Activated T-helper 1 cell treated with anti-CD3 and anti-CD28 coated beads, Interleukin-12 subunit alpha, Interleukin-12 subunit beta, Interleukin-2, Interleukin-4 antibody, amounts not matched to agents 30 ng/mL and 10 ng/mL and 1 ng/mL, durations not matched to agents 14 hours and 24 hours and 36 hours (primary cell): ENCODE measurements at regions of chr6 and their contacts with region 1.

Region 1: DNA sequence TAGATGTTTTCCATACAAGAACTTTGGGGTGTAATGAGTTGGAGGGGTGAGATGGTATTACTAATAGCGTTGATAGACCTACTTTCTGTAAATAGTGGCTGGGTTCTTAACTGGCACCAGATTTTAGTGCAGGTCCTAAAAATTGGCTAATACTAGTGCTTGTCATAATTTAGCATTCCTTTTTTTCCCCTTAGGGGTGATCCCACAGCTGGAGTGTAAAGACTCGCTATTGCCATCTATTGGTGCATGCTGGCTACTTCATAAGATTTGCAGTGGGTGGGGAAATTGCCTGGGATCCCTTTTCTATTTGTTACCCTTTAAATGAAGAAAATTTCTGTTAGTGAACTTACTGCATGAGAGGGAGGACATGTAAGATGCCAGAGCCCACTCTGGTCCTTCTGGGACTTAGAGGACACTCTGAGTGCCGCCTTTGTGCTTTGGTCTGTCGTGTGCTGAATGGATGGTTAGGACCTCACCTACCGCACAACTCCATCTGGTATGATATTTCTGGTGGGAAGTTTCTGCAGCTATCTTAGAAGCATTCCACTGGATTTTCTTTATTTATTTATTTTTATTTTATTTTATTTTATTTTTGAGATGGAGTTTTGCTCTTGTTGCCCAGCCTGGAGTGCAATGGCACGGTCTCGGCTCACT is 195.5 kb downstream of the JARID2 start:
- DNase-seq: no peak
- H3K4me3 Mint-ChIP-seq: no peak overlapping the region
- H3K27ac Mint-ChIP-seq: no peak overlapping the region
- H3K4me1 Mint-ChIP-seq: peaks cover 83% of the 10 kb centered on the region
- H3K27me3 Mint-ChIP-seq: no peaks in the 10 kb centered on the region

Region 2: DNA sequence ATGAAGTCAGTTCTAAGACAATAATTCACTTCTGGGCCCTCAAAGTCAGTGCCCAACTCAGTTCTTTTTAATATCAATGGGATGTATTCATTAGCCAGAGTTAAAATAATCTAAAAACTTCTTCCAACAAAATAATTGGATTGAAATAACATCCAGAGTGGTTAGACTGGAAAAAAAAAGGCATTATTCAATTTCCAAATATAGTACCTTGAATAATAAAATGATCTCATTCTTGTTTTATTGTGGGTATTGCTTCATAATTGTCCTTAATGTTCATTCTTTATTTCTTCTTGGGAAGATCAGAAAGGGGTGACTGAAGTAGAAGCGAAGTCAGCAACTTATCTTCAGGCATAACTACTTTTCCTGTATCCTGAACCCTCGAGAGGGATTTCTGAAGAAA is 280.5 kb before region 1 on chr6:
- intact Hi-C with region 1: no loop called
- DNase-seq: no peak
- H3K4me3 Mint-ChIP-seq: no peak overlapping the region
- H3K27ac Mint-ChIP-seq: no peak overlapping the region
- H3K4me1 Mint-ChIP-seq: no peaks in the 10 kb centered on the region
- H3K27me3 Mint-ChIP-seq: peaks cover 3% of the 10 kb centered on the region

Region 3: DNA sequence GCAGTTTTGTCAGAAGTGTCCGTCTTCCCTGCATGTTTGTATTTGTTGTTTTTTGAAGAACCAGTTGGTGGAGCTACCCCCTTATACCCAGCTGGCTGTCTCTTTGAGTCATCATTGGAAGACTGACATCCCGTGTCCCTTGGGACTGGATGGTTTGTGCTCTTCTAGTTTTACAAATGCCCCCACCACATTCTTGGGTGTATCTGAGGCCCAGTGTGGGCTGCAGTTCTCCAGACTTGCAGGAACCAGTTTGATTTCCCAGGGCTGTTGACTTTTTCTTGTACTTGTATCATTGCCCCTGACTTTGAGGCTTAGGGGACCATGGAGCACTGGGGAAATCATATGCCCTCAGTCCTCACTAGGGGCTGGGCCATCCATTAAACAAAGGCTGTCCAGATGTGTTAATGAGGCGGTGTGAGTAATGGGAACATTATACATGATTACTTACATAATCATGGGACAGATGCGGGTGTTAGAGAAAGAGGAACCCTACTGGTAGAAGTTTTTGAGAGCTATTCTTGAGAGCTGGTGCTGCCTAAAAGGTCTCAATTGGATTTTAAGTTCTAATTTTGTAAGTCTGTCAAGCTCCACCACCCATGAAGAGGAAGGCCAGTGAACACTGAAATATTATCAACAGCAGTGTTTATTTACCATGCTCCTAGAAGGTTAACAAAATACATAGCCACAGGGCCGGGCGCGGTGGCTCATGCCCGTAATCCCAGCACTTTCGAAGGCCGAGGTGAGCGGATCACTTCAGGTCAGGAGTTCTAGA is 187.1 kb before region 1 on chr6:
- intact Hi-C with region 1: loop called (anchors 1 kb)
- DNase-seq: no peak
- H3K4me3 Mint-ChIP-seq: peak overlapping the region; percentile 41
- H3K27ac Mint-ChIP-seq: peak overlapping the region; percentile 92
- H3K4me1 Mint-ChIP-seq: peaks cover 98% of the 10 kb centered on the region
- H3K27me3 Mint-ChIP-seq: no peaks in the 10 kb centered on the region

Region 4: DNA sequence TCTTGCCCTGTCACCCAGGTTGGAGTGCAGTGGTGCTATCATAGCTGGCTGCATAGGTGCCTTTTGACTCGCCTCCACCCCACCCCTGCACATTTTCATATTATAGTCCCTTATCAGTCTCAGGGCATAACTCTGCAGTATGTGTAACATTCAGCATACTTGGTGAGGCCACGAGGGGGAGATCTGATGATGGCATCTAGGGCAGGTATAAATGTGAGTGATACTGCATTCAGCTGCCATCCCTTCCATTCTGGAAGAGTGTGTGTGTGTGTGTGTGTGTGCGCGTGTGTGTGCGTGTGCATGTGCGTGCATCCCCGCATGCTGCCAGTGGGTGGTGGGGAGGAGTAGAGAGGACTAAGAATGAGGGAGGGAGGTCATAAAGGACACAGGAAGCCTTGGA is 114.1 kb before region 1 on chr6:
- intact Hi-C with region 1: loop called (anchors 2 kb)
- DNase-seq: peak; percentile 22
- H3K4me3 Mint-ChIP-seq: no peak overlapping the region
- H3K27ac Mint-ChIP-seq: peak overlapping the region; percentile 52
- H3K4me1 Mint-ChIP-seq: peaks cover 79% of the 10 kb centered on the region
- H3K27me3 Mint-ChIP-seq: no peaks in the 10 kb centered on the region

Region 5: GRCh38 chr6:15363523-15364400 is 77.6 kb before region 1 on chr6:
- intact Hi-C with region 1: loop called (anchors 2 kb)
- DNase-seq: no peak
- H3K4me3 Mint-ChIP-seq: no peak overlapping the region
- H3K27ac Mint-ChIP-seq: no peak overlapping the region
- H3K4me1 Mint-ChIP-seq: peaks cover 46% of the 10 kb centered on the region
- H3K27me3 Mint-ChIP-seq: no peaks in the 10 kb centered on the region

Region 6: GRCh38 chr6:15421947-15422733 is 19.2 kb before region 1 on chr6:
- intact Hi-C with region 1: loop called (anchors 2 kb)
- DNase-seq: peak; percentile 50
- H3K4me3 Mint-ChIP-seq: peak overlapping the region; percentile 59
- H3K27ac Mint-ChIP-seq: peak overlapping the region; percentile 83
- H3K4me1 Mint-ChIP-seq: peaks cover 80% of the 10 kb centered on the region
- H3K27me3 Mint-ChIP-seq: no peaks in the 10 kb centered on the region